GM12878 (cell line): ENCODE measurements at regions of chr22 and their contacts with region 1.

Region 1: GRCh38 chr22:17243524-17243923 is 24.3 kb upstream of the ADA2 start:
- DNase-seq: peak; percentile 84
- ATAC-seq: peak; percentile 97
- H3K4me3 ChIP-seq: no peak overlapping the region
- H3K27ac ChIP-seq: peak overlapping the region; percentile 97
- H3K4me1 ChIP-seq: peaks cover 24% of the 10 kb centered on the region
- H3K27me3 ChIP-seq: no peaks in the 10 kb centered on the region
- CTCF ChIP-seq: no peak
- EP300 ChIP-seq: peak in 1 of 2 experiments; percentile 66; a peak in 2 of 4 replicates
- POLR2A ChIP-seq: 0 out of 2 replicates have a peak, but pooled peaks have one; percentile 34
- RAD21 ChIP-seq: no peak

Region 2: DNA sequence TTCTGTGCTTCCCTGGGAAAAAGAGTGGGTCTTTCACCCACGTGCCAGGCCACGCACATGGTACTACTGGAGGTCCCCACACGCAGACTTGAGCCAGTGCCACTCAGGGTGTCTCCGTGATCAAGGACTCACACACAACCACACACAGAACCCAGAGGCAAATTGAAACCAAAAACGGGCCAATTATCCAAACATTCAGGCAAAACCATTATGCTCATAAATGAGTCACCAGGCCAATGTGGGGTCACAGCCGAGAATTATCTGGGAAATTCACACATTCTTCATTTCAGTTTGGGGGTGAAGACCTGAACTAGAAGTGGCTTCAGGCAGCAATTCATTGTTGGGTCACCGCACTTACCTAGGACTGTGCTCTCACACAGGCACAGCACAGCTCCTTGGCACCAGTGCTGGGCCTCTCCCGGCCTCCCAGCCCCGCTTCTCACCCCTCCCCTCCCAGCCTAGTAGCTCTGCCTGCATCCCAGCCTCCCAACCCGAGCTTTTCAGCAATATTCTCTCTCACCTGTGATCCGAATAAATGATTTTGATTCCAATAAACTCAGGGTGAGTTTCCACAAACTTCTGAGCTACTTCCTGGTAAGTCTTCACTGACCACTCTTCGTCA is 52.2 kb before region 1 on chr22:
- CTCF ChIA-PET with region 1: no interaction called
- POLR2A ChIA-PET with region 1: no interaction called
- RAD21 ChIA-PET with region 1: no interaction called
- SMC1A ChIA-PET with region 1: no interaction called
- in situ Hi-C with region 1: no loop called
- intact Hi-C with region 1: no loop called
- DNase-seq: no peak
- ATAC-seq: no peak
- H3K4me3 ChIP-seq: no peak overlapping the region
- H3K27ac ChIP-seq: no peak overlapping the region
- H3K4me1 ChIP-seq: no peaks in the 10 kb centered on the region
- H3K27me3 ChIP-seq: no peaks in the 10 kb centered on the region
- CTCF ChIP-seq: no peak
- EP300 ChIP-seq: no peak
- POLR2A ChIP-seq: no peak
- RAD21 ChIP-seq: no peak

Region 3: DNA sequence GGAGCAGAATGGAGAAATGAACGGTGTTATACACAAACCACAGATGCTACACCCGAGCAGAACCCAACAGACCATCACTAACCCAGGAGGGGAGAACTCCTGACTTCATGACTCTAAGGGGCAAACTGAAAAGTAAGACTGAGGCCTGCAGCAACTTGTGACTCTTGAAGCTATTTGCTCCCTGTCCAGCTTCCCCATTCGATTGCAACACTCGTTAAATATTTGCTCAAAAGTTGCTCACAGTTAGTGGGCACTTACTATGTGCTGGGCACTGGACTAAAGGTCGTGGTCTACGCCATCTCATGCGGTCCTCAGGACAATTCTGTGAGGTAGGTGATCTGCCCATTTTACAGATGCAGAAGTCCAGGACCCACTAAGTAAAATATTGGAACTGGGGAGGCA is 14.8 kb before region 1 on chr22:
- CTCF ChIA-PET with region 1: interaction called, 7 read pairs
- POLR2A ChIA-PET with region 1: interaction called, 3 read pairs
- RAD21 ChIA-PET with region 1: interaction called, 5 read pairs
- SMC1A ChIA-PET with region 1: interaction called, 23 read pairs
- in situ Hi-C with region 1: no loop called
- intact Hi-C with region 1: no loop called
- DNase-seq: no peak
- ATAC-seq: peak; percentile 72
- H3K4me3 ChIP-seq: no peak overlapping the region
- H3K27ac ChIP-seq: no peak overlapping the region
- H3K4me1 ChIP-seq: peaks cover 4% of the 10 kb centered on the region; the same call in 1 of the 2 replicates
- H3K27me3 ChIP-seq: no peaks in the 10 kb centered on the region
- CTCF ChIP-seq: no peak
- EP300 ChIP-seq: no peak
- POLR2A ChIP-seq: no peak
- RAD21 ChIP-seq: no peak